RWPE1 (cell line): ENCODE measurements at regions of chr17 and their contacts with region 1.

Region 1: DNA sequence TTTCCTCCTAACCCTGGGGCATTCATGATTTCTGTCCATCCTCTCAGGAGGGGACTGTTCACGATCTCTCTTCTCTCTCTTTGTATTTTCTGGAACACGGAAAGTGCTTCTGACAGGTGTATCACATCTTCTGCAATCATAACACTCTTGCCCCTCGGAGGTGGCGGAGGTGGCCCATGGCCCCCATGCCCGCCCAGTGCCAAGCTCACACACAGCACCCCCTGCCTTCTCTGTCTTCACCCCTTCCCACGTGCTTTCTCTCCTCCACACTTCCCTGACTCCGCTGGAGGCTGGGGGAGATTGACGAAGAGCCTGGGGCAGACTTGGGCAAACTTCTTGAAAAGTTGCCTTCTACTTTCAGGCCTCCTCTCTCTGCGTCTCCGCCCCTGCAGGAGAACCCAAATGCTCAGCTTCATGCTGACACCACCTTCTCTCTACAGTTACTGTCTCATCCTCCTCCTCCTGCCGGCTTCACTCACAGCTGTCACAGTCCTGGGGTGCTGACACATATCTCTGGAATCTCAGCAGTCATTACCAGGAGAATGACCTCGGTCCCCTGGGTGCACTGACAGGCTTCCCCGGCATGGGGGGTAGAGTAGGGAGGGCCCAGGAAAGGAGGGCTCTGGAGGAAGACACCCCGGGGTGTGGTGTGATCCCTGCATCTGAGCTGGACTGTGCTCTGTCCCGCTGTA is 127.1 kb downstream of the ENGASE start:
- DNase-seq: peak; percentile 57
- H3K27ac ChIP-seq: no peak overlapping the region
- CTCF ChIP-seq: no peak

Region 2: DNA sequence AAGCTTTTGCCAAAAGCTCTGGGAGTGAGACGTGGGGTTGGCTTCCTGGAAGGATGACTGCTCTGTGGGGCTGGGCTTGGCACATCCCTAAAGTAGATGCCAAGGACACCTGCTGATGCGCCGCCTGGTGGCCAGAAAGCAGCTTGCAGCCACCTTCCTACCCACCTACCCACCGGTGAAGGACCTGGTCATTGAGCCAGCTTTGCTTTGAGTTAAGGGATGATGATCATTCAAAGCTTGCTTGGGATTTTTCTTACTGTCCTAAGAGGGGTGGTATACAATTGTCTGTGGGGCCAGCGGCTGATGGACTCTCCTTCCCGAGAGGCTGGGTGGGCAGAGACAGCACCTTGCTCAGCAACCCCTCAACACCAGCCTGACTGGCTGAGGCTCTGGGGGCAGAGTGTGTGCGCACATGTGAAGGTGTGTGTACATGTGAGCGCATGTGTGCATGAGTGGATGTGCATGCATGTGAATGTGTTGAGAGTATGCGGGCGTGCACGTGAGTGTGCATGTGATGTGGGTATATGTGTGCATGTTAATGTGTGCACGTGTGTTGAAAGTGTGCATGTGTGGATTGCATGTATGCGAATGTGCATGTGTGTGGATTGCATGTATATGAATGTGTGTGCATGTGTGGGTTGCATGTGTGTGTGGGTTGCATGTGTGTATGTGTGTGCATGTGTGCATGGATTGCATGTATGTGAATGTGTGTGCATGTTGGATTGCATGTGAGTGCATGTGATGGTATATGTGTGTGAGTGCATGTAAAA is 159.1 kb before region 1 on chr17:
- CTCF ChIA-PET with region 1: no interaction called
- POLR2A ChIA-PET with region 1: no interaction called
- DNase-seq: peak; percentile 75
- H3K27ac ChIP-seq: peak overlapping the region; percentile 34
- CTCF ChIP-seq: peak; percentile 91

Region 3: GRCh38 chr17:79160980-79161636 is 40.6 kb before region 1 on chr17:
- CTCF ChIA-PET with region 1: no interaction called
- POLR2A ChIA-PET with region 1: no interaction called
- DNase-seq: no peak
- H3K27ac ChIP-seq: no peak overlapping the region
- CTCF ChIP-seq: no peak

Region 4: GRCh38 chr17:79280866-79281572 is 79.3 kb after region 1 on chr17:
- CTCF ChIA-PET with region 1: interaction called, 12 read pairs
- POLR2A ChIA-PET with region 1: no interaction called
- DNase-seq: no peak
- H3K27ac ChIP-seq: no peak overlapping the region
- CTCF ChIP-seq: no peak